Breast epithelium (tissue), 4 donors: ENCODE measurements at regions of chr11 and their contacts with region 1.

Region 1: GRCh38 chr11:124673333-124674167 is at the starts of genes SIAE and SPA17:
- DNase-seq: peak; percentile 92 to 93
- H3K4me3 ChIP-seq: peak within 1 kb of the TSS; percentile 70 to 77 (median 74)
- H3K27ac ChIP-seq: peak within 1 kb of the TSS; percentile 92 to 94
- H3K4me1 ChIP-seq: no peaks in the 10 kb centered on the region
- H3K27me3 ChIP-seq: no peaks in the 10 kb centered on the region
- CTCF ChIP-seq: no peak
- POLR2A ChIP-seq: peak; percentile 8
- total RNA-seq, gene SIAE: 12.5 to 17.0 (median 14.9) TPM
- total RNA-seq, gene SPA17: 2.9 to 15.2 (median 9.8) TPM

Region 2: GRCh38 chr11:124763156-124763947 is 89.8 kb after region 1 on chr11:
- intact Hi-C with region 1: loop called (anchors 10 kb)
- DNase-seq: peak; percentile 70 to 86
- H3K4me3 ChIP-seq: peak overlapping the region; percentile 52 to 66 (median 53)
- H3K27ac ChIP-seq: peak overlapping the region in 1 of 2 donors; percentile 85
- H3K4me1 ChIP-seq: peaks cover 0 to 8% of the 10 kb centered on the region in 2 donors
- H3K27me3 ChIP-seq: peaks cover 0 to 44% of the 10 kb centered on the region in 2 donors
- CTCF ChIP-seq: peak; percentile 60 to 67 (median 65)
- POLR2A ChIP-seq: no peak